ENCODE measurements at regions of chr3 and their contacts with region 1.

Region 1: DNA sequence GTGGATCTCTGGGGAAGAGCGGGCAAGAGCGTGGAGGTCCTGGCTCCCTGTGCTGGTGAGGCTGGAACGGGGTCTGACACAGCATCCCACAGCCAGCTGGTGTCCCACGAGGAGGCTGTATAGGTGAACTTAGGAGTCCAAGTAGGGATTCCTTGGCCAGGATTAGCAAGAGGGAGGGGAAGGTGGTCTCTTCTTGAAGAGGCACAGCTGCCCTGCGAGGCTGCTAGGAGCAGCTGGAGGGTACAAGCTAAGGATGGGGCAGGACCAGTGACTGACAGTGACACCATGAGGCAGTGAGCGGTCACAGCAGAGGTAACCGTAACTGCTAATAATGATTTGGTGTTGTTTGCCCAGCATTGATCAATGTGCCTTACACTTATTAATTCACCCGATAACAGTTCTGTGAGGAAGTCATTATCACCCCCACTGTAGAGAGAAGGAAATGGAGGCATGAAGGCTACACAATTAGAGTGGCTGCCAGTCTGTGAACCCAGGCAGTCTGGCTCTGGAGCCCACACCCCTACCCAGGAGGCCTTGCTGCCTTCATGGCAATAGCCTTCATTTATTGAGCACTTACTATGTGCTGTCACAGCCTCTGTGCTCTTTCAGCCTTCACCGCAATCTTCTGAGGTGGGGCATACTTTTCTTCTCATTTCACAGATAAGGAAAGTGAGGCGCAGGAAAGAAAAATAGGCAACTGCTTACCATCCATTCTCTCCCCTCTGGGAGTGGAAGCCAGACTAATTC is 59.4 kb downstream of the TMEM44 start:
- DNase-seq: peak; percentile 43
- H3K4me3 ChIP-seq: no peak overlapping the region
- H3K27ac ChIP-seq: no peak overlapping the region
- H3K4me1 ChIP-seq: no peaks in the 10 kb centered on the region
- H3K27me3 ChIP-seq: no peaks in the 10 kb centered on the region
- CTCF ChIP-seq: peak; percentile 36 to 67 (median 47)
- EP300 ChIP-seq: no peak
- POLR2A ChIP-seq: no peak

Region 2: GRCh38 chr3:194472290-194472920 is 101.5 kb before region 1 on chr3:
- in situ Hi-C with region 1: loop called in 1 of 4 experiments (anchors 10 kb)
- intact Hi-C with region 1: no loop called
- DNase-seq: no peak
- H3K4me3 ChIP-seq: no peak overlapping the region
- H3K27ac ChIP-seq: no peak overlapping the region
- H3K4me1 ChIP-seq: peaks cover 0 to 23% (median 6%) of the 10 kb centered on the region in 4 donors
- H3K27me3 ChIP-seq: no peaks in the 10 kb centered on the region
- CTCF ChIP-seq: peak; percentile 93 to 97 (median 96)
- EP300 ChIP-seq: no peak
- POLR2A ChIP-seq: no peak

Region 3: GRCh38 chr3:194481103-194481502 is 92.8 kb before region 1 on chr3:
- in situ Hi-C with region 1: loop called in 2 of 4 experiments (anchors 5 to 10 kb)
- intact Hi-C with region 1: no loop called
- DNase-seq: no peak
- H3K4me3 ChIP-seq: no peak overlapping the region
- H3K27ac ChIP-seq: no peak overlapping the region
- H3K4me1 ChIP-seq: peaks cover 11 to 51% (median 27%) of the 10 kb centered on the region in 4 donors
- H3K27me3 ChIP-seq: no peaks in the 10 kb centered on the region
- CTCF ChIP-seq: no peak
- EP300 ChIP-seq: no peak
- POLR2A ChIP-seq: no peak

Measured in transverse colon (tissue), 4 donors.